Activated CD4-positive, alpha-beta memory T cell treated with anti-CD3 and anti-CD28 coated beads for 36 hours (primary cell): ENCODE measurements at regions of chr15 and their contacts with region 1.

Region 1: DNA sequence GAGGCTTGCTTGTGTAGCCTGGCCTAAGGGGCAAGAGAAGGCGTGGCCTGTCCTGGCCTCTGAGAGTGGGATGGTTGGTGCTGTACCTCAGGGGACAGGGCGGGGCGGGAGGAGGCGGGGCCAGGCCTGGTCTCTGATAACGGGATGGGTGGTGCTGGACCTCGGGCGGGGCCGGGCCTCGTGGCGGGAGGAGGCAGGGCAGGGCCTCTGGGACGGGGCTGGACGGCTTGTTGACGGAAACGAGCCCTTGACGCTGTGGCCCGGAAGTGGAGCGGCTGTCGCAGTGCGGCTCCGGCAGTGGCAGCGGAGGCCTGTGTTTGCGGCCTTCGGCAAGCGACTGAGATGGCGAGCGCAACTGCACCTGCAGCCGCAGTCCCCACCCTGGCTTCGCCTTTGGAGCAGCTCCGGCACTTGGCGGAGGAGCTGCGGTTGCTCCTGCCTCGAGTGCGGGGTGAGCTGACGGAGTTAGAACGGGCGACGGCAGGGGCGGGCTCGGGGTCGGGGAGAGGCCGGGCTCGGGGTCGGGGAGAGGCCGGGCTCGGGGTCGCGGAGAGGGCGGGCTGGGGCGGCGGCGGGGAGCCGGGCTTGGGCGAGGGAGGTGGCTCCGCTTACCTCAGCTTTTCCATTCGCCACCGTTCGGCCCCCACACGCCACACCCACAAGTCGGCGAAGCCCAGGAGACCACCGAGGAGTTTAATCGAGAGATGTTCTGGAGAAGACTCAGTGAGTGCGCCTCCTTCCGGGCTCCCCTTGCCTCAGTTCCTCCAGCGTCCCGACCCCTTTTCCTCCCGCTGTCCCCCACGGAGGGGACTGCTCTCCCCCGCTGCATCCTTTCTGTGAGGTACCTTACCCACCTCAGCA is at the start of gene CCNDBP1:
- DNase-seq: peak; percentile 96
- H3K4me3 Mint-ChIP-seq: peak within 1 kb of the TSS; percentile 91
- H3K27ac Mint-ChIP-seq: peak within 1 kb of the TSS; percentile 86
- H3K4me1 Mint-ChIP-seq: peaks cover 24% of the 10 kb centered on the region
- H3K27me3 Mint-ChIP-seq: no peaks in the 10 kb centered on the region
- total RNA-seq, gene CCNDBP1: 79.5 to 80.6 TPM

Region 2: GRCh38 chr15:42575188-42576039 is 610.0 kb before region 1 on chr15 and contains the start of gene STARD9:
- CTCF ChIA-PET with region 1: no interaction called
- POLR2A ChIA-PET with region 1: no interaction called
- intact Hi-C with region 1: loop called (anchors 10 kb)
- DNase-seq: peak; percentile 97
- H3K4me3 Mint-ChIP-seq: peak within 1 kb of the TSS; percentile 84
- H3K27ac Mint-ChIP-seq: no peak within 1 kb of the TSS
- H3K4me1 Mint-ChIP-seq: peaks cover 15% of the 10 kb centered on the region
- H3K27me3 Mint-ChIP-seq: peaks cover 15% of the 10 kb centered on the region
- total RNA-seq, gene STARD9: 3.4 to 3.8 TPM

Region 3: GRCh38 chr15:42994546-42994945 is 190.8 kb before region 1 on chr15:
- CTCF ChIA-PET with region 1: no interaction called
- POLR2A ChIA-PET with region 1: no interaction called
- intact Hi-C with region 1: no loop called
- DNase-seq: no peak
- H3K4me3 Mint-ChIP-seq: no peak overlapping the region
- H3K27ac Mint-ChIP-seq: no peak overlapping the region
- H3K4me1 Mint-ChIP-seq: no peaks in the 10 kb centered on the region
- H3K27me3 Mint-ChIP-seq: no peaks in the 10 kb centered on the region

Region 4: DNA sequence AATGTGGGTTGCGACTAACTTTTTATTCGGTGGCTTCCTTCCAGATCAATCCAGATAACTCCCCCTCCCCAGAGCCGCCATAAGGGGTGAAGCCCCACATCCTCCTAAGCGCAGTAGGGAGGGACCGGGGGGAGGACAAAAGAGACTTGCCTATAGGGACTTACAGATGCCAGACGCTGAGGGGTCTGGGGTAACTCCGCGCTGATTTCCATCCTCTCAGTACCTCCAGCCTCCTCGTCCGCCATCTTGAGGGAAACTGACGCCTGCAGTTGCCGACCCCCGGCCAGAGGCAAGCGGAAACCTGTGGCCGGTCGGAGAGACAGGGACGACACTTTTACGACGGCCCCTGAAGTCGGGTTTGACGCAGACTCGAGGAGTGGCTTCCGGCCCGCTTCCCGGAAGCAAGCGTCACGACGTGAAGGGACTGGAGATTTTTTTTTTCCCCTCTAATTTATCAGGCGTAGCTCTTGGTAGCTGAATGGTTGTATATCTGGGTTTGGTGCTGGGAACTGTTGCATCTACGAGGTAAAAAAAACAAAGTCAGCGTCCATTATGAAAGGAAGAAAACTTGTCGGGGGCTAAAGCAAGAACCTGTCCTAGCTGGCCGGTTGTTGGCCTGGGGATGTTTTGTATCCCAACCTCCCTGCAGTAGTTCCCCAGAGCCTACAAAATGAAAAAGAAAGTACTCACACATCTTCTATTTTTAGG is 79.5 kb before region 1 on chr15 and contains the start of gene UBR1:
- CTCF ChIA-PET with region 1: no interaction called
- POLR2A ChIA-PET with region 1: interaction called, 3 read pairs
- intact Hi-C with region 1: loop called (anchors 2 kb)
- DNase-seq: peak; percentile 95
- H3K4me3 Mint-ChIP-seq: peak within 1 kb of the TSS; percentile 89
- H3K27ac Mint-ChIP-seq: peak within 1 kb of the TSS; percentile 95
- H3K4me1 Mint-ChIP-seq: peaks cover 39% of the 10 kb centered on the region
- H3K27me3 Mint-ChIP-seq: no peaks in the 10 kb centered on the region
- total RNA-seq, gene UBR1: 24.5 to 29.7 TPM

Region 5: GRCh38 chr15:43133430-43134156 is 51.8 kb before region 1 on chr15 and contains the start of gene TMEM62:
- CTCF ChIA-PET with region 1: no interaction called
- POLR2A ChIA-PET with region 1: no interaction called
- intact Hi-C with region 1: loop called (anchors 5 kb)
- DNase-seq: peak; percentile 83
- H3K4me3 Mint-ChIP-seq: peak within 1 kb of the TSS; percentile 84
- H3K27ac Mint-ChIP-seq: peak within 1 kb of the TSS; percentile 74
- H3K4me1 Mint-ChIP-seq: peaks cover 16% of the 10 kb centered on the region
- H3K27me3 Mint-ChIP-seq: peaks cover 4% of the 10 kb centered on the region
- total RNA-seq, gene TMEM62: 11.3 to 12.7 TPM

Region 6: DNA sequence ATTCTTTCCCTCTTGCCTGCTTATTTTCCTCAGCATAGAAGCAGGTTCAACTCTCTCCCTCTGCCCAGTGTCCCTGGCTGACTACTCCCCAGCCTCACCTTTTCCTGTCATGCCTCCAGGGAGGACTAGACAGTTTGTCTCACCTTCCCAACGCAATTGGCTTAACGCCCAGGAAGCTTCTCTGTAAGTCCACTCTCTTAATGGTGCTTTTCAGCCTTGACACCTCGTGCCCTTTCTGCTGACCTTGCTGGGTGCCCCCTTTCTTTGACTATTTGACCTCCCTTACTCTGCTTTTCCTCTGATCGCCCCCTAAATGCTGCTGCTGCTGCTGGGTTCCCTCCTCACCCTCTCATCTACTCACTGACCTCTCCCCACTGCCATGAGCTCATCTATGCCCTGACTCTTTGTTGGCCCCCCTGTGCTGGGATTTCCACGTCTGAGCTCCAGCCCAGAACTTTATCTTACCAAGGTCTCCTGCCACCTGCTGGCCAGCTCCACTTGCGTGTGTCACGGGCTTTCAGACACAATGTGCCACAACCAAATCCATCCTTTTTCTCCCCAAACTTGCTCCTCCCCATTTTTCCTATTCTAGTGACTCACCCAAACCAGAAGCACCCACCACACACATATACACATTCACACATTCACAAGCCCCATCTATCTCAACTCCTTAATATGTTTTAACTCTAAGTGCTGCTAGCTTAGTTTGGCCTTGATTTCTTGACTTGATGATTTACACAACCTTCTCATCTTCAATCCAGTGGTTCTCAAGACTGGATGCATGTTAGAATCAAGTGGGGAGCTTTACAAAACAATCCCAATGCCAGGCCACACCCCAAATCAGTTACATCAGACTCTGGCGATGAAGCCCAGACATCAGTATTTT is 18.9 kb after region 1 on chr15:
- CTCF ChIA-PET with region 1: interaction called, 46 read pairs
- POLR2A ChIA-PET with region 1: no interaction called
- intact Hi-C with region 1: no loop called
- DNase-seq: peak; percentile 65
- H3K4me3 Mint-ChIP-seq: no peak overlapping the region
- H3K27ac Mint-ChIP-seq: no peak overlapping the region
- H3K4me1 Mint-ChIP-seq: peaks cover 2% of the 10 kb centered on the region
- H3K27me3 Mint-ChIP-seq: peaks cover 1% of the 10 kb centered on the region

Region 7: GRCh38 chr15:43285609-43286037 is 100.2 kb after region 1 on chr15:
- CTCF ChIA-PET with region 1: interaction called, 14 read pairs
- POLR2A ChIA-PET with region 1: no interaction called
- intact Hi-C with region 1: loop called (anchors 1 kb)
- DNase-seq: peak; percentile 62
- H3K4me3 Mint-ChIP-seq: no peak overlapping the region
- H3K27ac Mint-ChIP-seq: no peak overlapping the region
- H3K4me1 Mint-ChIP-seq: peaks cover 2% of the 10 kb centered on the region
- H3K27me3 Mint-ChIP-seq: peaks cover 7% of the 10 kb centered on the region

Region 8: DNA sequence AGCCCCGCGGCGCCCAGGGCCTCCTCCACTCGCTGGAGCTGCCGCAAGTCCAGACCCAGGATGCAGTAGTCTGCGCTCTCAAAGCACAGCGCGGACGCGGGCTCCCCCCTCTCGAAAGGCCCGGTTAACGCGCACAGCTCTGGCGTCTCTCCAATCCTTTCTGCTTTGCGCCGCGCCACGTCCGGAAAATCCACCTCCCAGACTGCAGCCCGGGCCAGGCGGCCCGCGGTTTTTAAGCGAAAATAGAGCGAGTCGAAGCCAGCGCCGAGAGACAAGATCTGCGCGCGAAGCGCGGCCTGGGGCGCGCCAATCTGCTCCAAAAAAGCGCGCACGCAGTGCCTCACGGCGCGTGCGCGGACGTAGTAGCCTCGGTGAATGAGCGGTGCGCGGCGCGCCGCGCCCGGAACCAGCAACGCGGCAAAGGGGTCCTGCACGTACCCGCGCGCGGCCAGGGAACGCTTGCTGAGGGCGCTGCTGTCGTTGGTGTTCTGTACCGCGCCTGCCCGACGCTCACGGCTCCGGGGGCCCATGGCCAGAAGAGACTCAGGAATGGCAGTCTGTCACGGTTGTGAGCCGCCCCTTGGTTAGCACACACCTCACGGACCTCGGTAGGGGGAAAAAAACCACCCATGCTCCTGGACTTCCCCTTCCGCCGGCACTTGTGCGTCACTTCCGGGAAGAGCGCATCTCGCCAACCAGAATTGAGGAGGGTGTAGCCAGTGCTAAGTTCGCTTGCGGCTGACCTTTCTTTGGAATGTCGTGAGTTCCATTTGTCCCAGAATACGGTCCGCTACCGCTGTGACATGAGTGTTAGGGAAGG is 144.8 kb after region 1 on chr15 and contains the start of gene LCMT2:
- CTCF ChIA-PET with region 1: no interaction called
- POLR2A ChIA-PET with region 1: no interaction called
- intact Hi-C with region 1: loop called (anchors 1 kb)
- DNase-seq: peak; percentile 94
- H3K4me3 Mint-ChIP-seq: peak within 1 kb of the TSS; percentile 92
- H3K27ac Mint-ChIP-seq: peak within 1 kb of the TSS; percentile 99
- H3K4me1 Mint-ChIP-seq: peaks cover 41% of the 10 kb centered on the region
- H3K27me3 Mint-ChIP-seq: no peaks in the 10 kb centered on the region
- total RNA-seq, gene LCMT2: 7.7 to 9.1 TPM